ENCODE measurements at regions of chr6 and their contacts with region 1.

Region 1: GRCh38 chr6:45714741-45715507 is 300.7 kb downstream of the CLIC5 start:
- DNase-seq: peak; percentile 91
- ATAC-seq: peak; percentile 91
- H3K4me3 ChIP-seq: no peak overlapping the region
- H3K27ac ChIP-seq: no peak overlapping the region
- H3K4me1 ChIP-seq: peaks cover 15% of the 10 kb centered on the region
- H3K27me3 ChIP-seq: no peaks in the 10 kb centered on the region
- CTCF ChIP-seq: peak; percentile 94
- POLR2A ChIP-seq: 0 out of 2 replicates have a peak, but pooled peaks have one; percentile 58
- RAD21 ChIP-seq: peak; percentile 99

Region 2: DNA sequence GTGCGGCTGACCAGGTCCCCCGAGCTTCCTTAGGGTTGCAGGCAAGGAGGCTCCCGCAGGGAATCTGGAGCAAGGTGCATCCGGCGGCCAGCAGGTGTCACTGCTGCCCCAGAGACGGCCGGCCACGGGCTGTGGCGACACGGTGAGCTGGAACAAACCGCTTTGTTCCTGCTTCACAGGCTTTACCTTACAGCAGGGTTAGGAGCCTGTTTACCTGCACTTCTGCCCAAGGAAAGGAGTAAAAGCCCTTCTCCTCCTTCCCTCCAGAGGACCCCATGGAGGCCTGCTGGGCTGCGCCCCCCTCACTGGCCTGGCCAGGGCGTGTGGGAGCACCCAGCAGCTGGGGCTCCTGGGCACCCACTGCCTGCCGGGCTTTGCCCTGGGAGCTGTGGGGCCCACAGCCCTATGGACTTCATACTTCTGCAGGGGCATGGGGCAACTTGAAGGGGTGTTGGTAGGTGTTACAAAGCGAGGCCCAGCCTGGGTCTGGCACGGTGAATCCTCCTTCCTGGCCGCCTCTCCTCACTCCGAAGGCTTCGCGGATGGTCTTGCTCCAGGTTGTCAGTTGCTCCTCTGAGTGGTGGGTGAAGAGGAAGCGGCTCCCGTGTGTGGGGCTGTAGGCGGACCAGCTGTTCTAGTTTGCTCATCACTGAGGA is 1239.0 kb before region 1 on chr6:
- CTCF ChIA-PET with region 1: no interaction called
- POLR2A ChIA-PET with region 1: no interaction called
- dilution Hi-C with region 1: no loop called
- in situ Hi-C with region 1: loop called (anchors 25 kb)
- intact Hi-C with region 1: loop called (anchors 2 kb)
- DNase-seq: peak; percentile 65
- ATAC-seq: peak; percentile 98
- H3K4me3 ChIP-seq: no peak overlapping the region
- H3K27ac ChIP-seq: no peak overlapping the region
- H3K4me1 ChIP-seq: peaks cover 2% of the 10 kb centered on the region; the same call in 1 of the 2 replicates
- H3K27me3 ChIP-seq: peaks cover 40% of the 10 kb centered on the region
- CTCF ChIP-seq: peak; percentile 93
- POLR2A ChIP-seq: peak; percentile 57; the same call in 1 of the 2 replicates
- RAD21 ChIP-seq: peak; percentile 97

Region 3: GRCh38 chr6:44642870-44643529 is 1071.9 kb before region 1 on chr6:
- CTCF ChIA-PET with region 1: no interaction called
- POLR2A ChIA-PET with region 1: no interaction called
- dilution Hi-C with region 1: no loop called
- in situ Hi-C with region 1: loop called (anchors 10 kb)
- intact Hi-C with region 1: no loop called
- DNase-seq: peak; percentile 18
- ATAC-seq: no peak
- H3K4me3 ChIP-seq: no peak overlapping the region
- H3K27ac ChIP-seq: no peak overlapping the region
- H3K4me1 ChIP-seq: no peaks in the 10 kb centered on the region
- H3K27me3 ChIP-seq: peaks cover 9% of the 10 kb centered on the region
- CTCF ChIP-seq: no peak
- POLR2A ChIP-seq: no peak
- RAD21 ChIP-seq: no peak

Region 4: GRCh38 chr6:45075246-45075645 is 639.7 kb before region 1 on chr6:
- CTCF ChIA-PET with region 1: no interaction called
- POLR2A ChIA-PET with region 1: no interaction called
- dilution Hi-C with region 1: no loop called
- in situ Hi-C with region 1: loop called (anchors 25 kb)
- intact Hi-C with region 1: loop called (anchors 10 kb)
- DNase-seq: peak; percentile 94
- ATAC-seq: peak; percentile 97
- H3K4me3 ChIP-seq: no peak overlapping the region
- H3K27ac ChIP-seq: peak overlapping the region; percentile 41; the same call in 1 of the 2 replicates
- H3K4me1 ChIP-seq: peaks cover 2% of the 10 kb centered on the region
- H3K27me3 ChIP-seq: no peaks in the 10 kb centered on the region
- CTCF ChIP-seq: no peak
- POLR2A ChIP-seq: no peak
- RAD21 ChIP-seq: no peak

Region 5: GRCh38 chr6:45377554-45378333 is 337.2 kb before region 1 on chr6 and contains the start of gene SUPT3H:
- CTCF ChIA-PET with region 1: no interaction called
- POLR2A ChIA-PET with region 1: no interaction called
- dilution Hi-C with region 1: no loop called
- in situ Hi-C with region 1: no loop called
- intact Hi-C with region 1: loop called (anchors 2 kb)
- DNase-seq: peak; percentile 93
- ATAC-seq: peak; percentile 94
- H3K4me3 ChIP-seq: peak within 1 kb of the TSS; percentile 66
- H3K27ac ChIP-seq: peak within 1 kb of the TSS; percentile 95
- H3K4me1 ChIP-seq: no peaks in the 10 kb centered on the region
- H3K27me3 ChIP-seq: no peaks in the 10 kb centered on the region
- CTCF ChIP-seq: peak; percentile 27; the same call in 1 of the 2 replicates
- POLR2A ChIP-seq: peak; percentile 93
- RAD21 ChIP-seq: peak; percentile 41
- total RNA-seq, gene SUPT3H: 4.2 and 5.0 TPM in 2 replicates

Region 6: GRCh38 chr6:45532721-45533210 is 182.2 kb before region 1 on chr6:
- CTCF ChIA-PET with region 1: interaction called, 3 read pairs
- POLR2A ChIA-PET with region 1: no interaction called
- dilution Hi-C with region 1: no loop called
- in situ Hi-C with region 1: no loop called
- intact Hi-C with region 1: loop called (anchors 5 kb)
- DNase-seq: peak; percentile 68
- ATAC-seq: peak; percentile 75
- H3K4me3 ChIP-seq: peak overlapping the region; percentile 40; the same call in 1 of the 2 replicates
- H3K27ac ChIP-seq: 0 out of 2 replicates have a peak overlapping the region, but pooled peaks have one; percentile 7
- H3K4me1 ChIP-seq: peaks cover 6% of the 10 kb centered on the region
- H3K27me3 ChIP-seq: no peaks in the 10 kb centered on the region
- CTCF ChIP-seq: no peak
- POLR2A ChIP-seq: no peak
- RAD21 ChIP-seq: no peak